ENCODE measurements at regions of chr4 and their contacts with region 1.

Region 1: GRCh38 chr4:112189754-112190153 is 41.8 kb upstream of the AP1AR start:
- DNase-seq: no peak
- H3K4me3 Mint-ChIP-seq: no peak overlapping the region
- H3K27ac Mint-ChIP-seq: no peak overlapping the region
- H3K4me1 Mint-ChIP-seq: no peaks in the 10 kb centered on the region
- H3K27me3 Mint-ChIP-seq: no peaks in the 10 kb centered on the region
- CTCF ChIP-seq: peak; percentile 6

Region 2: GRCh38 chr4:112093636-112094202 is 96.0 kb before region 1 on chr4:
- CTCF ChIA-PET with region 1: interaction called, 40 read pairs
- POLR2A ChIA-PET with region 1: no interaction called
- intact Hi-C with region 1: no loop called
- DNase-seq: no peak
- H3K4me3 Mint-ChIP-seq: no peak overlapping the region
- H3K27ac Mint-ChIP-seq: no peak overlapping the region
- H3K4me1 Mint-ChIP-seq: no peaks in the 10 kb centered on the region
- H3K27me3 Mint-ChIP-seq: no peaks in the 10 kb centered on the region
- CTCF ChIP-seq: no peak

Region 3: DNA sequence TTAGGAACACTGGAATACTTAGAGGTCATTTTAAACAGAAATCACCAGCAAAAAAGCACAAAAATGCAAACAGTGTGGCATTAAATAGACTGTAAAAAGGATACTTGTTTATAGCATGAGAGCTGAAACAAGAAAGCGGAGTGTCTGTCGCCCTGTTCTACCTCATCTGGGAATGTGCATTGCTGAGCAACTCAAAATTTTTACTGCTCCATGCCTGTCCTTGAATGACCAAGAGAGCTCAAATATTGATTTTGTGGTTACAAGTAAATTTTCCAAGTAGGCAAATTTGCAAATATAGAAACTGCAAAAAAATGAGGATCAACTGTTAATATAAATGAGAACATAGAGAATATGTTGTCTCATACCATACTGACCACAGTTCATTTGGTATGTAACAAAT is 67.3 kb after region 1 on chr4:
- CTCF ChIA-PET with region 1: interaction called, 11 read pairs
- POLR2A ChIA-PET with region 1: no interaction called
- intact Hi-C with region 1: no loop called
- DNase-seq: no peak
- H3K4me3 Mint-ChIP-seq: no peak overlapping the region
- H3K27ac Mint-ChIP-seq: no peak overlapping the region
- H3K4me1 Mint-ChIP-seq: no peaks in the 10 kb centered on the region
- H3K27me3 Mint-ChIP-seq: no peaks in the 10 kb centered on the region
- CTCF ChIP-seq: no peak

Region 4: DNA sequence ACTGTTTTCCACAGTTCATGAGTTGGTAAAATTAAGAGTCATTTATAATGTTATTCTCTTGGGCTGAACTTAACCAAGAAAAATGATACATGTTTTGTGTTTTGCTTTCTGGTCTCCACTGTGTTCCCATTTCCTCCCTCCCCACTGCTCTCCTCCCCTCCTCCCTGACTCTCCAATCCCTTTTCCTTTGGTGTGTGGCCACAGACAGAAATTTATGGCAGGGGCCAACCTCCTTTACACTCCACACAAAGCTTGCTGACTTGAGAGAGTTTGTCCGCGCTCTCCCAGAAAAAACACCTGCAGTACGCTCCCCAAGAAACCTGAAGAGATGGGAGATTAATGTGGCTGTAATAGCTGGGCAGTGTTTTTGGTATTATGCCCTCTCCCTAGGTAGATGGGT is 196.3 kb after region 1 on chr4:
- CTCF ChIA-PET with region 1: no interaction called
- POLR2A ChIA-PET with region 1: no interaction called
- intact Hi-C with region 1: no loop called
- DNase-seq: no peak
- H3K4me3 Mint-ChIP-seq: no peak overlapping the region
- H3K27ac Mint-ChIP-seq: no peak overlapping the region
- H3K4me1 Mint-ChIP-seq: no peaks in the 10 kb centered on the region
- H3K27me3 Mint-ChIP-seq: no peaks in the 10 kb centered on the region
- CTCF ChIP-seq: no peak

Region 5: GRCh38 chr4:112823606-112824005 is 633.9 kb after region 1 on chr4:
- CTCF ChIA-PET with region 1: no interaction called
- POLR2A ChIA-PET with region 1: no interaction called
- intact Hi-C with region 1: no loop called
- DNase-seq: no peak
- H3K4me3 Mint-ChIP-seq: no peak overlapping the region
- H3K27ac Mint-ChIP-seq: no peak overlapping the region
- H3K4me1 Mint-ChIP-seq: peaks cover 15% of the 10 kb centered on the region
- H3K27me3 Mint-ChIP-seq: no peaks in the 10 kb centered on the region
- CTCF ChIP-seq: no peak